ENCODE measurements at regions of chr5 and their contacts with region 1.

Region 1: DNA sequence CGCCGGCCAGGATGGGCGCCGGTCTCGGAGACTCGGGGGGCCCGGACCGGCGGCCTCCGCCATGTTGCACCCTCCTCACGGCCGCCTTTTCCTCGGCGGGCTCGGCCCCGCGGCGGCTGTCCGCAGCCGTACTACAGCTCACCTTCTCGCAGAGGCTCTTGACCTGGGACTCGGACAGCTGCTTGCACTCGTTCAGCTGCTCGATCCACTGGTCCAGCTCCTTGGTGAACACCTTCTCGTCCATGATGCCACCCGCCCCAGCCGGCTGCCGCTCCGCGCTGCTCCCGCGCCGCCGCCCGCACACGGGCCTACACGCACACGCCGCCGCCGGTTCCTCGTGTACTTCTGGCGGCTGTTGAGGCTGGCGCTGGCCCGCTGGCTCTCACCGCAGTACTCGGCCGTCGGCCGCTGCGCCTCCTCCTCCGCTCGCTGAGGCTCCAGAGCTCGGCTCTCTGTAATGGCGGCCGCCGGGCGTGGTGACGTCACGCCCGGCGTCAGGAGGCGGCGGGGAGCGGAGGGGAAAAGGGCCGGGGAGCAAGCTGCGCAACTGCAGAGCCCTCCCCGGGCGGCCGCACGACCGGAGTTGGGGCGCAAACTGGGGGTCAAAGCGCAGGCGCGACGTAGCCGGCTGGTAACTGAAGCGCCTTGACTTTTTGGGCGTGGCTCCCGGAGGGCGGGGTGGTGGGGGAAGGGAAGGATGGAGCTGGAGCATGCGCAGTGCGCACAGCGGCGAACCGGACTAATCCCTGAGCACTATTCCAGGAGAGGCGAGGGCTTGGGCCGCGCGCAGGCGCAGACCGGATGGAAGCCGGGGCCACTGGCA is at the start of gene PPP2CA:
- DNase-seq: peak; percentile 99
- H3K4me3 ChIP-seq: peak within 1 kb of the TSS; percentile 67 to 99 (median 98)
- H3K27ac ChIP-seq: peak within 1 kb of the TSS; percentile 98
- H3K4me1 ChIP-seq: peaks cover 13% of the 10 kb centered on the region
- H3K27me3 ChIP-seq: no peaks in the 10 kb centered on the region
- CTCF ChIP-seq: no peak
- total RNA-seq, gene PPP2CA: 80.7 to 170 TPM

Region 2: DNA sequence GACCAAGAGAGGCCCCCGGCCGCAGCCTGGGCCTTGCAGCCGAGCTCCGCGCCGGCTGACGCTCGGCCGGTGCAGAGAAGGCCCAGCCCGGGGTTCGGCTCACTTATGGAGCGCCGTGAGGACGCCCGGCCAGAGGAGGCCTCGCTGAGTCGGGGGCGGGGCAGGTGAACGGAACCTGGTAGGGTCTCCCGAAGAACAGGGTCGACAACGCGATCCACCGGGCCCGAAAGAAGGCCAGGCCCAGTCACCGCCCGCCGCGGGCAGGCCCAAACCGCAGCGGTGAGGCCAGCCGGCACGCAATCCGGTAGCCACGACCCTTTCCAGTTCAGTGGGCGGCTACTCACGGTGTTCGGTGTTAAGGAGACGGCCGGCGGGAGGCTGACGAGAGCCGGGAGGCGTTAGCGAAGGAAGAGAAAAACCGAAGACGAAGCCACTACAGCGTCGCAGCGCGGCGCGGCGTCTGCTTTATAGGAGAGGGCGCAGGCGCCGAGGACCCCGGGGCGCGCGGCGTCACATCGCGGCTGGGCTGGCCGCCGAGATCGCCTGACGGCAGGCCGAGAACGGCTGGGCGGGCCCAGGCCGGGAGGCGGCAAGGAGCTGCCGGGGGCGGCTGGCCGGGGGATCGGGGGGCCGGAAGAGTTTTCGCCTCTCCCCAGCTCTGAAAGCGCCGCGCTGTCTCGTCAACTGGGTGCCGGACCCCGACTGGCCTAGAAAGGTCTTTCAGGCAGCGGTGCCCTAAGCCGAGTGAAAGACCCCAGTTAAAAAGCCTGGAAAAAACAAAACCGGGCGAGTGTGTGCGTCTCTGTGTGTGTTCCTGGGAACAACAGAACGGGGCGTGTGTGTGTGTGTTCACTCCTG is 49.1 kb before region 1 on chr5 and contains the start of gene SKP1:
- CTCF ChIA-PET with region 1: no interaction called
- dilution Hi-C with region 1: loop called (anchors 10 kb)
- in situ Hi-C with region 1: no loop called
- intact Hi-C with region 1: loop called (anchors 2 kb)
- DNase-seq: peak; percentile 84
- H3K4me3 ChIP-seq: peak within 1 kb of the TSS; percentile 56 to 95 (median 93)
- H3K27ac ChIP-seq: peak within 1 kb of the TSS; percentile 84
- H3K4me1 ChIP-seq: peaks cover 15% of the 10 kb centered on the region
- H3K27me3 ChIP-seq: no peaks in the 10 kb centered on the region
- CTCF ChIP-seq: no peak
- total RNA-seq, gene SKP1: 146 to 231 TPM

Region 3: GRCh38 chr5:134184155-134185135 is 41.4 kb before region 1 on chr5:
- CTCF ChIA-PET with region 1: no interaction called
- dilution Hi-C with region 1: loop called (anchors 10 kb)
- in situ Hi-C with region 1: no loop called
- intact Hi-C with region 1: loop called (anchors 2 kb)
- DNase-seq: peak; percentile 42
- H3K4me3 ChIP-seq: no peak overlapping the region
- H3K27ac ChIP-seq: no peak overlapping the region
- H3K4me1 ChIP-seq: no peaks in the 10 kb centered on the region
- H3K27me3 ChIP-seq: no peaks in the 10 kb centered on the region
- CTCF ChIP-seq: peak; percentile 88 to 97

Region 4: DNA sequence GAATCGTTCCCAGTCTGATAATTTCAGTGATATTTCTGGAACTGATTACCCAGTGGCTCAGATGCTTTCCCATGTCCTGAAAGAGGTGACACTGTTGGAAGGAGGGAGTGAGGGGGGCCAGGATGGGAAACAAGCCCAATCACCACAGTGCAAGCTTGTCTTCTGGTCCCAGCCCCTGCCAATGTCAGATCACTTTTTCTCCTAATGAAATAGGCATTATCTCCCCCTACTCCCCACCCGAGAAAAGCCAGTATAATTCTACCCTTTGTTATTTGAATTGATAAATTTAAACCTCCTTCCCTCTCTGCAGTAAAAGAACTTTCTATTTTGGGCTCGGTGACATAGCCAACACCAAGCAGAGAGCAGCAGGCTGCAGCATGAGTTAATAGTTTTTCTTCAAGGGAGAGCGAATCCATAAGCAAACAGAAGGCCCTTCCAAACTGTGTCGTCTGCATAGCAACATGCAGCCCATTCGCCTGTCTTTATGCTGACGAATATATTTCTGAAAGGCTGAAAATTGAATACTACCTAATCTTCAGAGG is 14.7 kb after region 1 on chr5:
- CTCF ChIA-PET with region 1: interaction called, 3 read pairs
- dilution Hi-C with region 1: no loop called
- in situ Hi-C with region 1: no loop called
- intact Hi-C with region 1: loop called (anchors 1 kb)
- DNase-seq: peak; percentile 44
- H3K4me3 ChIP-seq: no peak overlapping the region
- H3K27ac ChIP-seq: no peak overlapping the region
- H3K4me1 ChIP-seq: peaks cover 11% of the 10 kb centered on the region
- H3K27me3 ChIP-seq: no peaks in the 10 kb centered on the region
- CTCF ChIP-seq: no peak

Region 5: DNA sequence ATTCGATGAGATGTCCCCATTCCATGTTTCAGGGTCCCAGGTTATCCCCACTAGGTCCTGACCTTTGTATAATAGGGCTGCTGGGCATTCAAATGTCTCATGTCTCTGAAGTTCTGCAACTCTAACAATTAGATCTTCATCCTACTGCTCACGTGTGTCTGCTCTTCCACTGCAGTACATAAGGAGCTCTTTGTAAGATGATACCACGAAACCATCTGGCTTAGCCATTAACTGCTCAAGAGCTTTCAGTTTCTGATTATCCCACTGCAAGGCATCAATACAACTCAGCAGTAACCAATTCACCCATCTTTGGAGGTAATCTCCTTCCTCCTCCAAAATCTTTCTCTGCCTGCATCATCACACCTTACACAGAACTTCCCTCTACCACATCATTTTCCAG is 50.0 kb after region 1 on chr5:
- CTCF ChIA-PET with region 1: no interaction called
- dilution Hi-C with region 1: no loop called
- in situ Hi-C with region 1: loop called in 1 of 2 experiments (anchors 10 kb)
- intact Hi-C with region 1: loop called (anchors 5 kb)
- DNase-seq: no peak
- H3K4me3 ChIP-seq: no peak overlapping the region
- H3K27ac ChIP-seq: no peak overlapping the region
- H3K4me1 ChIP-seq: peaks cover 11% of the 10 kb centered on the region
- H3K27me3 ChIP-seq: no peaks in the 10 kb centered on the region
- CTCF ChIP-seq: no peak

Region 6: DNA sequence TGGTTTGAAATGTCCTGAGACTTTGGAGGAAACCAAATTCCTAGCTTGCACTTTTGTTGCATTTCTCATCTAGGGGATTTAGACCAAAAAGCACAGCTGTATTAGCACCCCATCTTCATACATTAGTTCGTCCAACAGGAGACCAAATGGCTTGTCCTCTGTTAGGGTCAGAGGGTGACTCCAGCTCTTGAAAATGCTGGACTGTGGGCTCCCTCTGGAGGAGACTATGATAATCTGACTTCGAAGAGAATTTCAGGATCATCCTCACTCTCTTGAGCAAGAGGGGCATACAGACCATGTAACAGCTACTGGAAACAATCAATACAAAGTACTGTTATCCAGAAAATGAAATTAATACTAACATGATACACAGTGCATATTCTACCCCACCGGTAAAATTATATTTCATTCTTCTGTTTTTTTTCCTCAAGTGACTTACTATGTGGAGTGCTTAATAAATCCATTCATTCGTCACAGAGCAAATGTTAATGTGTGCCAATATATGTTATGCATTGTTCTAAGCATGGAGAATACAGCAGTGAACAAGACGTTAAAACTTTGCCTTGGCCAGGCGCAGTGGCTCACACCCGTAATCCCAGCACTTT is 63.8 kb after region 1 on chr5:
- CTCF ChIA-PET with region 1: no interaction called
- dilution Hi-C with region 1: no loop called
- in situ Hi-C with region 1: loop called in 1 of 2 experiments (anchors 10 kb)
- intact Hi-C with region 1: loop called (anchors 1 kb)
- DNase-seq: peak; percentile 52
- H3K4me3 ChIP-seq: no peak overlapping the region
- H3K27ac ChIP-seq: no peak overlapping the region
- H3K4me1 ChIP-seq: no peaks in the 10 kb centered on the region
- H3K27me3 ChIP-seq: no peaks in the 10 kb centered on the region
- CTCF ChIP-seq: peak; percentile 76 to 78

Region 7: DNA sequence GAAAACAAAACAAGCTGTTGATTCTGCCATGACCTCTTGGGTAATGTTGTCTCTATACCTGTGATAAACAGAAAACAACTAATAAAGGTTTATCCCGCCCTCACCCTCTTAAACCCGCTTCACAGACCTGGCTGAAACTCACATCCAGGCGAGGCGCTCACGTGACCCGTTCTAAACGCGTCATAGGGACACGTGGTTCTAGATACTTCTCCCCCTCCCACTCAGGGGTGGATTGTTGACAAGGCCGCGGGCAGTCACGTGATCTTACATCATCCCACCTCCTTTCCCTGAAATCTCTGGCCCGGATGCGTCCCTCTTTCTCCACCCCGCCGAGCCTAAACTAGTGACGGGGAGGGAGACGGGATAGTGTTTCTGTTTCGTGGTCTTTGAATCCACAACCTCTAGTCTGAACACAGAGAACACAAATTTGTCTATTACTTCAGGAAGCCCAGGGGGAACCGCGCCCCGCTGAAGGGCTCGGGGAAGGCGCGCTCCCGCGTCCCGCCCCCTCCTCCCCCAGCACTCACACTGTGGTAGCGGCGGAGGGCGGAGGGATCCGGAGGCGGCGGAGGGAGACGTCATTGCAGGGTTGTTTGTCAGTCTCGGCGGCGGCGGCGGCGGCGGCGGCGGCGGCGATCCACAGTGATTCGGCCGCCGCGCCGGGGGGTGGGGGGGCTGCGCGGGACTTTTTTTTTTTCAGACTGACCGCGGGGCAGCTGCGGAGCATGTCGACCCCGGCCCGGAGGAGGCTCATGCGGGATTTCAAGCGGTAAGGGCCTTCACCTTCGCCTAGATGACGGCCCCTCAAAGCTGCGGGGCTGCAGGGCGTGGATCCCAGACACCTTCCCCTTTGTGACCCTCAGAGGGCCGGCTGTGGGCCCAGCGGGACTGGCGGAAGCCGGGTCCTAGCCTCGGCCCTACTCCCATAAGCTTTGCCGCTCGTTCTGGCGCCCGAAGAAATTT is 145.3 kb after region 1 on chr5 and contains the start of gene UBE2B:
- CTCF ChIA-PET with region 1: no interaction called
- dilution Hi-C with region 1: no loop called
- in situ Hi-C with region 1: no loop called
- intact Hi-C with region 1: loop called (anchors 5 kb)
- DNase-seq: peak; percentile 99
- H3K4me3 ChIP-seq: peak within 1 kb of the TSS; percentile 94 to 97 (median 95)
- H3K27ac ChIP-seq: peak within 1 kb of the TSS; percentile 89
- H3K4me1 ChIP-seq: peaks cover 9% of the 10 kb centered on the region
- H3K27me3 ChIP-seq: no peaks in the 10 kb centered on the region
- CTCF ChIP-seq: no peak
- total RNA-seq, gene UBE2B: 37.2 to 83.3 TPM

Measured in mammary epithelial cell (primary cell).